Breast epithelium (tissue), 4 donors: ENCODE measurements at regions of chr14 and their contacts with region 1.

Region 1: DNA sequence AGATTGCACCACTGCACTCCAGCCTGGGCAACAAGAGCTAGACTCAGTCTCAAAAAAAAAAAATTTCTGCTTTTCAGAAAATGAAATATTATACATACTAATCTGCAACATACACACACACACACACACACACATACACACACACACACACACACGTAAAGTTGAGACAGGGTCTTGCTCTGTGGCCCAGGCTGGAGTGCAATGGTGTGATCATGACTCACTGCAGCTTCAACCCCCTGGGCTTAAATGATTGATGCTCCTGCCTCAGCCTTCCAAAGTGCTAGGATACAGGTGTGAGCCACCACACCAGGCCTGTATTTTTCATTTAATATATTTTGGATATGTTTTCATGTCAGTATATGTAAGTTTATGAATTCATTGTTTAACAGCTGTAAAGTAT is 18.8 kb upstream of the WDR20 start:
- DNase-seq: no peak
- H3K4me3 ChIP-seq: no peak overlapping the region
- H3K27ac ChIP-seq: no peak overlapping the region
- H3K4me1 ChIP-seq: no peaks in the 10 kb centered on the region
- H3K27me3 ChIP-seq: no peaks in the 10 kb centered on the region
- CTCF ChIP-seq: no peak
- POLR2A ChIP-seq: no peak

Region 2: DNA sequence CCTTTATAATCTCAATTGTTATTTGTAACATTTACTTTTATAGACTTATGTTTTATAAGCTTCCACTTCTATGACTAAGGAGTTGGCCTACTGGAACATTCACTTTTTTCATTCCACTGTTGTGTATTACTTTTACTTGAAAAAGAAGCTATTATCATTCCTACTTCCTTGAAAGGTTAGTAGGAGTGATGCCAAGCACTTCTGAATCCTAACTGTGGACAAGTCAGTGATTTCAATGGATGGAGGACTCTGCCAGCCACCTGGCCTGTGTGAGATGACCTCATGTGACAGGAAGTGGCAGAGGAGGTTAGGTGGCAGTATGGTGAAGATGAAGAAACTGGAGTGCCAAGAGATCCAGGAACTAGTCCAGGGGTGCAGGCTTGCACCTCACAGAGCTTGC is 287.8 kb after region 1 on chr14:
- intact Hi-C with region 1: loop called (anchors 5 kb)
- DNase-seq: peak in 1 of 2 donors; percentile 76
- H3K4me3 ChIP-seq: no peak overlapping the region
- H3K27ac ChIP-seq: peak overlapping the region; percentile 80 to 87
- H3K4me1 ChIP-seq: no peaks in the 10 kb centered on the region
- H3K27me3 ChIP-seq: no peaks in the 10 kb centered on the region
- CTCF ChIP-seq: no peak
- POLR2A ChIP-seq: no peak